CD8-positive, alpha-beta T cell (primary cell): ENCODE measurements at regions of chr3 and their contacts with region 1.

Region 1: DNA sequence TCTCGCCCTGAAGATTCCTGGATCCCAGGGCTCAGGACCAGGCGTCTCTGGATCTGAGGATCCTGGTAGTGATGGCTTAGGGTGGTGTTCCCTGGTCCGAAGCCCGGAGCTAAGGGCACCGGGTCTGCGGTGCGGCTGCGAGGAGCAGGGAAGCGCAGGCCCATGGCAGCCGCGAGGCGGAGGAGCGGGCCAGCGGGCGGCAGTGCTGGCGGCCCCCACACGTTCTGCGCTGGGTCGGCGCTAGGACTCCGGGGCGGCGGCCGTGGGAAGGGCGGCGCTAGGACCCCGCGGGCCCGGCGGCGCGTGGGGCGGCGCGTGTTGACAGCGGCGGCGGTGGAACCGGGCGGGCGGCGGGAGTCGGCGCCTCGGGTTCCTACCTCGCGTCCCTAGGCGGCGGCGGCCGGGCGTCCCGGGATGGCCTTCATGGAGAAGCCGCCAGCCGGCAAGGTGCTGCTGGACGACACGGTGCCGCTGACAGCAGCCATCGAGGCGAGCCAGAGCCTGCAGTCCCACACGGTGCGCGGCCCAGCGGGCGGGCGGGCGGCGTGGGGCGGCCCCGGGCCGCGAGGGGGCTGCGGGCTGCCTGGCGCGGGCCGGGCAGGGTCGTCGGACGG is at the start of gene PXK:
- DNase-seq: peak; percentile 62 to 86 (median 76)
- ATAC-seq: peak; percentile 90
- H3K4me3 ChIP-seq: peak within 1 kb of the TSS; percentile 71 to 78
- H3K4me3 Mint-ChIP-seq: peak within 1 kb of the TSS; percentile 100
- H3K27ac ChIP-seq: peak within 1 kb of the TSS in 1 of 2 experiments; percentile 25
- H3K27ac Mint-ChIP-seq: peak within 1 kb of the TSS; percentile 94
- H3K4me1 ChIP-seq: peaks cover 29% of the 10 kb centered on the region
- H3K4me1 Mint-ChIP-seq: peaks cover 30% of the 10 kb centered on the region
- H3K27me3 ChIP-seq: no peaks in the 10 kb centered on the region
- H3K27me3 Mint-ChIP-seq: no peaks in the 10 kb centered on the region
- CTCF ChIP-seq: no peak
- total RNA-seq, gene PXK: 14.9 to 15.0 TPM

Region 2: GRCh38 chr3:58366699-58367098 is 34.0 kb after region 1 on chr3:
- CTCF ChIA-PET with region 1: no interaction called
- POLR2A ChIA-PET with region 1: no interaction called
- intact Hi-C with region 1: no loop called
- DNase-seq: no peak
- ATAC-seq: no peak
- H3K4me3 ChIP-seq: no peak overlapping the region
- H3K4me3 Mint-ChIP-seq: no peak overlapping the region
- H3K27ac ChIP-seq: no peak overlapping the region
- H3K27ac Mint-ChIP-seq: no peak overlapping the region
- H3K4me1 ChIP-seq: no peaks in the 10 kb centered on the region
- H3K4me1 Mint-ChIP-seq: peaks cover 17% of the 10 kb centered on the region
- H3K27me3 ChIP-seq: no peaks in the 10 kb centered on the region
- H3K27me3 Mint-ChIP-seq: no peaks in the 10 kb centered on the region
- CTCF ChIP-seq: no peak

Region 3: GRCh38 chr3:58414538-58415197 is 82.0 kb after region 1 on chr3:
- CTCF ChIA-PET with region 1: interaction called, 9 read pairs
- POLR2A ChIA-PET with region 1: no interaction called
- intact Hi-C with region 1: loop called (anchors 1 kb)
- DNase-seq: peak in 6 of 9 experiments; percentile 23 to 72 (median 42)
- ATAC-seq: peak; percentile 91
- H3K4me3 ChIP-seq: no peak overlapping the region
- H3K4me3 Mint-ChIP-seq: no peak overlapping the region
- H3K27ac ChIP-seq: no peak overlapping the region
- H3K27ac Mint-ChIP-seq: no peak overlapping the region
- H3K4me1 ChIP-seq: no peaks in the 10 kb centered on the region
- H3K4me1 Mint-ChIP-seq: no peaks in the 10 kb centered on the region
- H3K27me3 ChIP-seq: no peaks in the 10 kb centered on the region
- H3K27me3 Mint-ChIP-seq: no peaks in the 10 kb centered on the region
- CTCF ChIP-seq: peak; percentile 60

Region 4: GRCh38 chr3:58433400-58434169 is 100.9 kb after region 1 on chr3 and contains the start of gene PDHB:
- CTCF ChIA-PET with region 1: interaction called, 3 read pairs
- POLR2A ChIA-PET with region 1: interaction called, 3 read pairs
- intact Hi-C with region 1: loop called (anchors 1 kb)
- DNase-seq: peak; percentile 74 to 94 (median 88)
- ATAC-seq: peak; percentile 97
- H3K4me3 ChIP-seq: peak within 1 kb of the TSS; percentile 88 to 98
- H3K4me3 Mint-ChIP-seq: peak within 1 kb of the TSS; percentile 92
- H3K27ac ChIP-seq: peak within 1 kb of the TSS; percentile 86 to 87
- H3K27ac Mint-ChIP-seq: peak within 1 kb of the TSS; percentile 97
- H3K4me1 ChIP-seq: peaks cover 10% of the 10 kb centered on the region
- H3K4me1 Mint-ChIP-seq: peaks cover 25% of the 10 kb centered on the region
- H3K27me3 ChIP-seq: no peaks in the 10 kb centered on the region
- H3K27me3 Mint-ChIP-seq: no peaks in the 10 kb centered on the region
- CTCF ChIP-seq: no peak
- total RNA-seq, gene PDHB: 32.5 to 33.2 TPM